ENCODE measurements at regions of chr4 and their contacts with region 1.

Region 1: DNA sequence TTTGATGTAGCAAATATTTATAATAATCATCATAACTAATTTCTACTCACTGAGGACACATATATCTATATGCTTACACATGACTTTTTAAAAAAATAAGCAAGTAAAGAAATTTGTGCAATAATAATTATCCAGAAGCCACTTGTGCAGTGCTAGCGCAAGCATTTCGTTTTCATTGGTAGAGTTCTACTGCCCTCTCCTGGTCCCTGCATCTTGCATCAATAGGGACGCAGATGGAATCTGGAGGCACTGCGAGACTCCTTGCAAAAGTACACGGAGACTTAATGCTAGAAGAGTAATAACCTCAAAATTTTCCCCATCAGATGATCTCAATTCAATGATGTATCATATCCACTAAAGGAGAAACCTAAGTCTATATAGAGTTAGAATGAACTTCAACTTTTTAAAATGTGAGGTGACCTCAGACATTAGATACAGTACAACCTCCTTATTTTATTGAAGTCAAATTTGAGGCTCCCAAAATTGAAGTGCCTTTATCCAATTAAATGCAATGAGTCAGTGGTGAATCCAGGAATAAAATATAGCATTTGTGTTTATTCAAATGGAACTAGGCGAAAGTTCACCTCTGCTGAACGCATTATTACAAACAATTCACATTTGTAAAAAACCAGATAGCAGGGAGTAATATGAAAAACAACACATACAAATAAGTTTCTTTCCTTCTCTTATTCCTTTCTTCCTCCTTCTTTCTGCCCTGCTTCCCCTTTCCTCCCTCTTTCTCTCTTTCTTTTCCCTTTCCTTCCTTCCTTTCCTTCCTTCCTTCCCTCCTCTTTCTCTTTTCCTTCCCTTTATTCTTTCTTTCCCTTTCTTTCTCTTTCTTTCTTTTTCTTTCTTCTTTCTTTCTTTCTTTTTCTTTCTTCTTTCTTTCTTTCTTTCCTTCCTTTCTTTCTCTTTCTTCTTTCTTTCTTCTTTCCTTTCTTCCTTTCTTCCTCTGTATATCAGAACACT is 450.0 kb downstream of the ANKRD50 start:
- DNase-seq: peak; percentile 88
- H3K4me3 ChIP-seq: peak overlapping the region; percentile 10; the same call in 1 of the 2 replicates
- H3K27ac ChIP-seq: no peak overlapping the region
- H3K4me1 ChIP-seq: peaks cover 8% of the 10 kb centered on the region
- H3K27me3 ChIP-seq: no peaks in the 10 kb centered on the region

Region 2: GRCh38 chr4:123096038-123096437 is 1166.5 kb before region 1 on chr4:
- in situ Hi-C with region 1: loop called (anchors 10 kb)
- DNase-seq: no peak
- H3K4me3 ChIP-seq: no peak overlapping the region
- H3K27ac ChIP-seq: no peak overlapping the region
- H3K4me1 ChIP-seq: no peaks in the 10 kb centered on the region
- H3K27me3 ChIP-seq: no peaks in the 10 kb centered on the region

Region 3: DNA sequence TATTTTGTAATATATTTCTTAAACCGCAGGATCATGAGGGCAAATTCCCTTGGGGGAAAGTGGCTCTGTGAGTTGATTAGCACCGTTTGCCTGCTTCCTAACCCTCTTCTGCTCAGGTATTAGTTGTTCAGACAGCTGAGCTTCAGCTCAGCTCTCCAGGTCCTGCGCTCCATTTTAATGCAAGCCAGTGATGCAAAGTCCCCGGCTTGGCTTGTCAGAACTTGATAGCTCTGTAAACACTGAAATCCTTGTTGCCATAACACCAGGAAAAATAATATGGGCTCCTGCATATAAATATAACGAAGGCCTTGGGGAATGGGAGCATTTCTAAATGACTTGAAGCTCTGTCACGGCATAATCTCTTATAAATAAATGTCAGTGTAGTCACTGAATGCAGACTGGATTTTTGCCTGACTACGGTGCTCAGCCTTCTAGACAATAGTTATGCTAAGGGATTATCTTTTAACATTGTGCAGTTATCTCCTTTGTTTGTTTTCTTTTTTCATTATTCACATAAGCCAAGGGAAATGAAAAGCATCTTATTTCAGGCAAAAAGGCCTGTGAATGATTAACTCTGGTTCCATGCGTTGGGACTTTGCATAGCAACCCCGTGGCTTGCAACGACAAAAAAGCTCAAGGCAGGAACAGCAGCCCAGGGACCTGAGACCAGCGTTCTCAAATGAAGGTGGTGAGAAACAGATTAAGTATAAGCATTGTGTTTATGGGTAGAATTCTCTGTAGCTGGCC is 612.7 kb before region 1 on chr4:
- in situ Hi-C with region 1: loop called (anchors 25 kb)
- DNase-seq: peak; percentile 76
- H3K4me3 ChIP-seq: peak overlapping the region; percentile 11
- H3K27ac ChIP-seq: peak overlapping the region; percentile 47
- H3K4me1 ChIP-seq: peaks cover 17% of the 10 kb centered on the region
- H3K27me3 ChIP-seq: no peaks in the 10 kb centered on the region

Region 4: GRCh38 chr4:124727331-124727890 is 464.9 kb after region 1 on chr4:
- in situ Hi-C with region 1: no loop called
- DNase-seq: no peak
- H3K4me3 ChIP-seq: no peak overlapping the region
- H3K27ac ChIP-seq: no peak overlapping the region
- H3K4me1 ChIP-seq: 0 out of 2 replicates have a peak, but pooled peaks cover 3% of the 10 kb centered on the region
- H3K27me3 ChIP-seq: no peaks in the 10 kb centered on the region

Region 5: DNA sequence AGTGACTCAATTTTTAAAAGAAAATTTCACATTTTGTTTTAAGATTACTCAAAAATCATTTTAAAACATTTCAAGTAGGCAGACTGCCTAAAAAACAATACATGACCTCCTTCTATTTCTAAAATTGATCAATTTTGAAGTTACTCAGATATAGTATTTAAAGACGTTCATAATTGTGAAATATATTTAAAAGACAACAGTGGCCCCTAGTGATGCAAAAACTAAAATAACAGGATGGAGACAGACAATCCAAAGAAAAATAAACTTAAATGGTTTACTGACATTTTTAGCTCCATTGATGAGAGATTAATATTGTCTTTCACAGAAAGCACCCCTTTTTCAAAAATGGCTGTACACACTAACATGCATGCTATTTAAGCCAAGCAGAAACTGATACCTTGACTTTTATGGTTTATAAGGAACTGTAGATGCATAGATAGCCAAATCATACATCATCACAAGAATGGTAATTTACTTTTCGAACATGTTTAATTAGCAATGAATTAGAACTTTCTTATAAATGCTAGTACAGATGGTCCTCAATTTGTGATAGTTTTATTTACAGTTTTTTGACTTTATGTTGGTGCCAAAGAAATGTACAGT is 982.5 kb after region 1 on chr4:
- in situ Hi-C with region 1: no loop called
- DNase-seq: peak; percentile 45
- H3K4me3 ChIP-seq: no peak overlapping the region
- H3K27ac ChIP-seq: no peak overlapping the region
- H3K4me1 ChIP-seq: peaks cover 6% of the 10 kb centered on the region; the same call in 1 of the 2 replicates
- H3K27me3 ChIP-seq: no peaks in the 10 kb centered on the region